CD14-positive monocyte (primary cell): ENCODE measurements at regions of chr1 and their contacts with region 1.

Region 1: DNA sequence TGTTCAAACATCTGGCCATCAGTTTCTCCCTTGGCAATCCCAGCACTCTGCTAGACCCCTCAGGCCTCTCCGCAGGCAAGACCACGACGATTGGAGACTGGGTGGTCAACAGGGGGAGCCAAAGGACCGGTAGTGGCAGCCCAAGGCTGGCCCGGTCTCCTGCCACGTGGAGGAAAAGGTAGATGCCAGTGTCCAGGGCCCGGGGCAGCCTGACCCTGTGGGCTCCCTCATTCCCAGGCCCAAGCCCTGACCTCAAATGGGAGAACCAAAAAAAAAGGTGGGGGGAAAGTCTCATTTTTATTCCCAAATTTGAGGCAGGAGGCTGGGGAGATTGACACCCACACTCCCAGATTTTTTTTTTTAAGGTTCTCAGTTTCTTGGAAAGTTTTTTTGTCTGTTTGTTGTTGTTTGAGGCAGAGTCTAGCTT is 24.8 kb downstream of the S100A6 start:
- DNase-seq: peak; percentile 57 to 82 (median 79)
- H3K4me3 ChIP-seq: no peak overlapping the region
- H3K4me3 Mint-ChIP-seq: no peak overlapping the region
- H3K27ac ChIP-seq: no peak overlapping the region
- H3K27ac Mint-ChIP-seq: peak overlapping the region in 1 of 7 donors; percentile 18
- H3K4me1 ChIP-seq: peaks cover 35 to 41% of the 10 kb centered on the region in 2 donors
- H3K4me1 Mint-ChIP-seq: peaks cover 47% of the 10 kb centered on the region
- H3K27me3 ChIP-seq: no peaks in the 10 kb centered on the region
- H3K27me3 Mint-ChIP-seq: peaks cover 0 to 9% (median 3%) of the 10 kb centered on the region in 3 donors
- CTCF ChIP-seq: peak; percentile 88

Region 2: GRCh38 chr1:153441238-153441933 is 69.6 kb before region 1 on chr1:
- intact Hi-C with region 1: no loop called
- DNase-seq: no peak
- H3K4me3 ChIP-seq: no peak overlapping the region
- H3K4me3 Mint-ChIP-seq: no peak overlapping the region
- H3K27ac ChIP-seq: no peak overlapping the region
- H3K27ac Mint-ChIP-seq: no peak overlapping the region
- H3K4me1 ChIP-seq: peaks cover 0 to 6% of the 10 kb centered on the region in 2 donors
- H3K4me1 Mint-ChIP-seq: peaks cover 3% of the 10 kb centered on the region
- H3K27me3 ChIP-seq: no peaks in the 10 kb centered on the region
- H3K27me3 Mint-ChIP-seq: peaks cover 5 to 27% (median 6%) of the 10 kb centered on the region in 3 donors
- CTCF ChIP-seq: no peak

Region 3: GRCh38 chr1:153545067-153546055 is 34.4 kb after region 1 on chr1 and contains the start of gene S100A4:
- intact Hi-C with region 1: loop called in 1 of 2 experiments (anchors 5 kb)
- DNase-seq: peak; percentile 83 to 86 (median 83)
- H3K4me3 ChIP-seq: peak within 1 kb of the TSS; percentile 83 to 94 (median 87)
- H3K4me3 Mint-ChIP-seq: peak within 1 kb of the TSS; percentile 98 to 100
- H3K27ac ChIP-seq: peak within 1 kb of the TSS; percentile 77 to 91
- H3K27ac Mint-ChIP-seq: peak within 1 kb of the TSS; percentile 95 to 98 (median 98)
- H3K4me1 ChIP-seq: peaks cover 92 to 98% of the 10 kb centered on the region in 2 donors
- H3K4me1 Mint-ChIP-seq: peaks cover 99% of the 10 kb centered on the region
- H3K27me3 ChIP-seq: no peaks in the 10 kb centered on the region
- H3K27me3 Mint-ChIP-seq: peaks cover 0 to 6% (median 2%) of the 10 kb centered on the region in 3 donors
- CTCF ChIP-seq: no peak
- polyA plus RNA-seq, gene S100A4: 4,538 to 7,344 (median 6,092) TPM

Region 4: DNA sequence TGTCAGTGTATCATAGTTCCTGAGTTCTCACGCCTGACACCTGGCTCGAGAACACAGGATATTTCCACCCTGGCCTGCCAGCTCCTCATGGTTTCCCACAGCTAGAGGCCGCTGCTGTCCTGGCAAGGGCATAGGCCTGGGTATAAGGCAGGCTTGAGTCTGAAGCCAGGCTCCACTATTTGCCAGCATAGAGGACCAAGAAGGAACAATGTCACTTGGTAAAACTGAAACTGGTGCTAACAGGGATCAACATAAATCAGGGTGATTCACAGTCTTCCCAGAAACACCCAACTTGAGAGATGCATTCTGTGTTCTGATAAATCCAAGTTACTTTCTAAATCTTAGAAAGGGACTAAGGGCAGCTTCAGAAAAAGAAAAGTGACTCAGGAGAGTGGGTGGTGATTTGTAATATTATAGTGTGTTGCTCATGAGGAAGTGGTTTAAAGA is 61.6 kb after region 1 on chr1:
- intact Hi-C with region 1: loop called (anchors 1 to 5 kb)
- DNase-seq: peak; percentile 55 to 74 (median 67)
- H3K4me3 ChIP-seq: peak overlapping the region in 1 of 3 experiments; percentile 19
- H3K4me3 Mint-ChIP-seq: no peak overlapping the region
- H3K27ac ChIP-seq: peak overlapping the region; percentile 59 to 66
- H3K27ac Mint-ChIP-seq: peak overlapping the region; percentile 76 to 92 (median 87)
- H3K4me1 ChIP-seq: peaks cover 44 to 47% of the 10 kb centered on the region in 2 donors
- H3K4me1 Mint-ChIP-seq: peaks cover 49% of the 10 kb centered on the region
- H3K27me3 ChIP-seq: no peaks in the 10 kb centered on the region
- H3K27me3 Mint-ChIP-seq: peaks cover 0 to 10% (median 2%) of the 10 kb centered on the region in 3 donors
- CTCF ChIP-seq: peak; percentile 78

Region 5: GRCh38 chr1:153583976-153584375 is 73.0 kb after region 1 on chr1:
- intact Hi-C with region 1: no loop called
- DNase-seq: no peak
- H3K4me3 ChIP-seq: no peak overlapping the region
- H3K4me3 Mint-ChIP-seq: no peak overlapping the region
- H3K27ac ChIP-seq: no peak overlapping the region
- H3K27ac Mint-ChIP-seq: no peak overlapping the region
- H3K4me1 ChIP-seq: no peaks in the 10 kb centered on the region
- H3K4me1 Mint-ChIP-seq: peaks cover 4% of the 10 kb centered on the region
- H3K27me3 ChIP-seq: no peaks in the 10 kb centered on the region
- H3K27me3 Mint-ChIP-seq: peaks cover 4 to 8% (median 7%) of the 10 kb centered on the region in 3 donors
- CTCF ChIP-seq: no peak

Region 6: GRCh38 chr1:153617675-153618074 is 106.7 kb after region 1 on chr1:
- intact Hi-C with region 1: loop called in 1 of 2 experiments (anchors 5 kb)
- DNase-seq: peak; percentile 62 to 73 (median 70)
- H3K4me3 ChIP-seq: no peak overlapping the region
- H3K4me3 Mint-ChIP-seq: no peak overlapping the region
- H3K27ac ChIP-seq: no peak overlapping the region
- H3K27ac Mint-ChIP-seq: peak overlapping the region in 2 of 7 donors; percentile 30 to 42
- H3K4me1 ChIP-seq: peaks cover 19 to 24% of the 10 kb centered on the region in 2 donors
- H3K4me1 Mint-ChIP-seq: peaks cover 16% of the 10 kb centered on the region
- H3K27me3 ChIP-seq: no peaks in the 10 kb centered on the region
- H3K27me3 Mint-ChIP-seq: peaks cover 0 to 2% (median 0%) of the 10 kb centered on the region in 3 donors
- CTCF ChIP-seq: no peak

Region 7: DNA sequence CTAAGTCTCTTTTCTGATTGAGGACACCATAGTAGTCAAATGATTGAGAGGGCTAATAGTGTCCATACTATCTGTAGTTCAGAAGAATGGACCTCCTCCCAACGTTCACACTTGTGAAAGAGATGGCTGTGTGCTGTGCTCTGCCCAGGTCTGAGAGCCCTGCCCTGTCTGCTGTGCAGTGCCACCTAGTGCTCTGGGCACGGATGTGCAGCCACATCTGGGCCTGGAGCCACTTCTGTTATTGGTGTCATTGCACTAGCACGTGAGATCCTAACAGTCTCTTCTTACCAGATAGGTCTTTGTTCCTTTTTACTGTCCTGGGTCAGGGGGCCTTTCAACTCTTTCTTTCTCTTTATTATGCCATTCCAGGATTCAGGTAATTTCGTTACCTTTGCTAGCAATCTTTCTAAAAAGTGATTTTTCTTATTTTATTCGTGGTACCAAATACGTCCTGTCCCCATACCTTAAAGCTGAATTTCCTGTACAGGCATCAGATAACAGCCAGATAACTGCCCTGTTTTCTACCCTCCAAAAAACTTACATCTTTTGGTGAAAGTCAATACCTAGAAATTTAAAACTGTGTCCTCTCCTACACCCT is 238.5 kb after region 1 on chr1:
- intact Hi-C with region 1: loop called (anchors 10 kb)
- DNase-seq: peak; percentile 75 to 88 (median 85)
- H3K4me3 ChIP-seq: no peak overlapping the region
- H3K4me3 Mint-ChIP-seq: no peak overlapping the region
- H3K27ac ChIP-seq: no peak overlapping the region
- H3K27ac Mint-ChIP-seq: peak overlapping the region in 3 of 7 donors; percentile 12 to 65 (median 61)
- H3K4me1 ChIP-seq: peaks cover 6 to 9% of the 10 kb centered on the region in 2 donors
- H3K4me1 Mint-ChIP-seq: peaks cover 14% of the 10 kb centered on the region
- H3K27me3 ChIP-seq: no peaks in the 10 kb centered on the region
- H3K27me3 Mint-ChIP-seq: no peaks in the 10 kb centered on the region
- CTCF ChIP-seq: peak; percentile 85